ENCODE measurements at regions of chr14 and their contacts with region 1.

Region 1: GRCh38 chr14:105086833-105087307 is 21.6 kb upstream of the GPR132 start:
- DNase-seq: peak; percentile 93
- ATAC-seq: peak; percentile 90
- H3K4me3 Mint-ChIP-seq: peak overlapping the region; percentile 72
- H3K27ac Mint-ChIP-seq: no peak overlapping the region
- H3K4me1 Mint-ChIP-seq: peaks cover 16% of the 10 kb centered on the region
- H3K27me3 Mint-ChIP-seq: no peaks in the 10 kb centered on the region
- CTCF ChIP-seq: peak; percentile 87

Region 2: DNA sequence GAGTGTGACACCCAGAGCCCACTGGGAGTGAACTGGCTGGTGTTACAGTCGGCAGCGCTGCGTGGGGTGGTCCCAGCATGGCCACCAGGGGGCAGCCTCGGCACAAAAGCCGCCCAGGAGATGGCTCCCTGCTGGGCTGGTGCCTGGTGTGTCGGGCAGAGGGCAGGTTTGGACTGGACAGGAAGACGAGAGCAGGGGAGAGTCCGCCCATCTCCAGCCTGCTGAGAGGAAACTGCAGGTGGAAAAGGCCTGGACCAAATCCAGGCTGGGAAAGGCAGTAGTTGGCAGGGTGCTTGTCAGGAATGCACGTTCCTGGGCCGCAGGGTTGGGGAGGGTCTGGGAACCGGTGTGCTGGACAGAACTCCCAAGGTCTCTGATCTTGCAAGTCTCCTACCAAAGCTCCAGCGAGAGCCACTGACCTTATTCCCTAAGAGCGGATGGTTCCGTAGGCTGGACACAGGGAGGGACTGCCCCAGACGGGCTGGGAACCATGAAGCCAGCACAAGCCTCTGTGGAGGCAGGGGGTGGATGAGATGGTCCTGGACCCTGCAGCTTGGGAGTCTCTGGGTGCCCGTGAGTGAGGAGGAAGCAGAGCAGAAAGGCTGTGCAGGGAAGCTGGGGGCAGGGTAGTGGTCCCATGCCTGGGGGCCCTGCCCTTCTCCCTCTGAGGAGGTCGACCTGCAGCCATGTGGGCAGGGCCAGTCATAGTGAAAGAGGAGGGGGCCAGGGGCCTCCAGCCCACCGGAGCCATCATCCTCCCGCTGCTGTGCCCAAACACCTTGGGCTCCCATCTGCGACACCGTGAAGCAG is 110.5 kb before region 1 on chr14:
- CTCF ChIA-PET with region 1: interaction called, 21 read pairs
- POLR2A ChIA-PET with region 1: no interaction called
- intact Hi-C with region 1: no loop called
- DNase-seq: peak; percentile 87
- ATAC-seq: peak; percentile 85
- H3K4me3 Mint-ChIP-seq: no peak overlapping the region
- H3K27ac Mint-ChIP-seq: no peak overlapping the region
- H3K4me1 Mint-ChIP-seq: peaks cover 11% of the 10 kb centered on the region
- H3K27me3 Mint-ChIP-seq: peaks cover 26% of the 10 kb centered on the region
- CTCF ChIP-seq: peak; percentile 98

Region 3: GRCh38 chr14:105045710-105046326 is 41.1 kb before region 1 on chr14:
- CTCF ChIA-PET with region 1: interaction called, 30 read pairs
- POLR2A ChIA-PET with region 1: interaction called, 6 read pairs
- intact Hi-C with region 1: no loop called
- DNase-seq: peak; percentile 96
- ATAC-seq: peak; percentile 92
- H3K4me3 Mint-ChIP-seq: no peak overlapping the region
- H3K27ac Mint-ChIP-seq: peak overlapping the region; percentile 22
- H3K4me1 Mint-ChIP-seq: peaks cover 16% of the 10 kb centered on the region
- H3K27me3 Mint-ChIP-seq: peaks cover 9% of the 10 kb centered on the region
- CTCF ChIP-seq: peak; percentile 100

Region 4: GRCh38 chr14:105065280-105066228 is 21.3 kb before region 1 on chr14 and contains the start of gene GPR132:
- CTCF ChIA-PET with region 1: interaction called, 72 read pairs
- POLR2A ChIA-PET with region 1: interaction called, 33 read pairs
- intact Hi-C with region 1: no loop called
- DNase-seq: peak; percentile 96
- ATAC-seq: peak; percentile 74
- H3K4me3 Mint-ChIP-seq: peak within 1 kb of the TSS; percentile 86
- H3K27ac Mint-ChIP-seq: peak within 1 kb of the TSS; percentile 96
- H3K4me1 Mint-ChIP-seq: peaks cover 62% of the 10 kb centered on the region
- H3K27me3 Mint-ChIP-seq: no peaks in the 10 kb centered on the region
- CTCF ChIP-seq: no peak
- total RNA-seq, gene GPR132: 15.1 to 16.4 TPM

Region 5: DNA sequence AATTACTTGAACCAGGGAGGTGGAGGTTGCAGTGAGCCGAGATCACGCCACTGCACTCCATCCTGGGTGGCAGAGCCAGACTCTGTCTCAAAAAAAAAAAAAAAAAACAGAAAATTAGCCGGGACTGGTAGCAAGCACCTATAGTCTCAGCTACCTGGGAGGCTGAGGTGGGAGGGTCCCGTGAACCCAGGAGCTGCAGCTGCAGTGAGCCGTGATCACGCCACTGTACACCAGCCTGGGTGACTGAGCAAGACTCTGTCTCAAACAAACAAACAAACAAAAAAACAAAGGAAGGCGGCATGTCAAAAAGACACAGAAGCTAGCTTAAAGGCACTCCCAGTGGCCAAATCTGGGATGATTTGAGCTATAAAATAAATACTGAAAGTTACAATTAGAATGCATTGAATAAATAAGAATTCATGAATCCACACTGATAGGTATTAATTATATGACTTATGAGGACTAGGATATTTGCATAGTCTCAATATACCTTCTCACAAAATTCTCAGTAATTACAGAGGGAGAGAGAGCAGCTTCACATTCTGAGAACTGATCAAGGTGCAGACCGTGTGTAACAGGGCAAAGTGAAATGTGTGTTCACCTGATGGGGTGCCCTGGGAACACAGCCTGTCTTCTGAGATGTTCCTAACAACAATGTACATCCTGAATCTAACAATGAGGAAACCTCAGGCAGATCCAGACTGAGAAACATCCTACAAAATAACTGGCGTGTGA is 21.1 kb after region 1 on chr14:
- CTCF ChIA-PET with region 1: interaction called, 12 read pairs
- POLR2A ChIA-PET with region 1: no interaction called
- intact Hi-C with region 1: no loop called
- DNase-seq: no peak
- ATAC-seq: no peak
- H3K4me3 Mint-ChIP-seq: no peak overlapping the region
- H3K27ac Mint-ChIP-seq: no peak overlapping the region
- H3K4me1 Mint-ChIP-seq: no peaks in the 10 kb centered on the region
- H3K27me3 Mint-ChIP-seq: peaks cover 28% of the 10 kb centered on the region
- CTCF ChIP-seq: no peak

Region 6: GRCh38 chr14:105294142-105294597 is 207.3 kb after region 1 on chr14:
- CTCF ChIA-PET with region 1: interaction called, 12 read pairs
- POLR2A ChIA-PET with region 1: no interaction called
- intact Hi-C with region 1: no loop called
- DNase-seq: peak; percentile 86
- ATAC-seq: peak; percentile 91
- H3K4me3 Mint-ChIP-seq: peak overlapping the region; percentile 14
- H3K27ac Mint-ChIP-seq: peak overlapping the region; percentile 83
- H3K4me1 Mint-ChIP-seq: peaks cover 42% of the 10 kb centered on the region
- H3K27me3 Mint-ChIP-seq: no peaks in the 10 kb centered on the region
- CTCF ChIP-seq: no peak

Measured in activated CD8-positive, alpha-beta T cell treated with anti-CD3 and anti-CD28 coated beads for 36 hours (primary cell).